Activated naive CD4-positive, alpha-beta T cell treated with anti-CD3 and anti-CD28 coated beads, Interleukin-2, amount 10 ng/mL, durations not matched to agents 7 days and 5 days (primary cell): ENCODE measurements at regions of chr3 and their contacts with region 1.

Region 1: GRCh38 chr3:160027541-160028195 is 39.0 kb downstream of the IL12A start:
- DNase-seq: no peak
- H3K4me3 Mint-ChIP-seq: no peak overlapping the region
- H3K27ac Mint-ChIP-seq: peak overlapping the region; percentile 86
- H3K4me1 Mint-ChIP-seq: peaks cover 15% of the 10 kb centered on the region
- H3K27me3 Mint-ChIP-seq: no peaks in the 10 kb centered on the region

Region 2: GRCh38 chr3:159910991-159911663 is 116.5 kb before region 1 on chr3:
- CTCF ChIA-PET with region 1: no interaction called
- DNase-seq: peak; percentile 48
- H3K4me3 Mint-ChIP-seq: peak overlapping the region; percentile 61
- H3K27ac Mint-ChIP-seq: peak overlapping the region; percentile 80
- H3K4me1 Mint-ChIP-seq: peaks cover 12% of the 10 kb centered on the region
- H3K27me3 Mint-ChIP-seq: peaks cover 8% of the 10 kb centered on the region

Region 3: GRCh38 chr3:160003520-160004128 is 24.0 kb before region 1 on chr3:
- CTCF ChIA-PET with region 1: interaction called, 31 read pairs
- DNase-seq: peak; percentile 54
- H3K4me3 Mint-ChIP-seq: no peak overlapping the region
- H3K27ac Mint-ChIP-seq: no peak overlapping the region
- H3K4me1 Mint-ChIP-seq: peaks cover 3% of the 10 kb centered on the region
- H3K27me3 Mint-ChIP-seq: no peaks in the 10 kb centered on the region

Region 4: GRCh38 chr3:160133757-160134156 is 106.1 kb after region 1 on chr3:
- CTCF ChIA-PET with region 1: interaction called, 13 read pairs
- DNase-seq: no peak
- H3K4me3 Mint-ChIP-seq: no peak overlapping the region
- H3K27ac Mint-ChIP-seq: no peak overlapping the region
- H3K4me1 Mint-ChIP-seq: no peaks in the 10 kb centered on the region
- H3K27me3 Mint-ChIP-seq: peaks cover 8% of the 10 kb centered on the region

Region 5: GRCh38 chr3:160340351-160340750 is 312.7 kb after region 1 on chr3:
- CTCF ChIA-PET with region 1: interaction called, 10 read pairs
- DNase-seq: no peak
- H3K4me3 Mint-ChIP-seq: no peak overlapping the region
- H3K27ac Mint-ChIP-seq: no peak overlapping the region
- H3K4me1 Mint-ChIP-seq: no peaks in the 10 kb centered on the region
- H3K27me3 Mint-ChIP-seq: no peaks in the 10 kb centered on the region